Mammary epithelial cell (primary cell): ENCODE measurements at regions of chr16 and their contacts with region 1.

Region 1: GRCh38 chr16:30761928-30762810 is at the starts of genes CFAP119 and RNF40:
- DNase-seq: peak; percentile 97
- H3K4me3 ChIP-seq: peak within 1 kb of the TSS; percentile 46 to 66 (median 55)
- H3K27ac ChIP-seq: peak within 1 kb of the TSS; percentile 61
- H3K4me1 ChIP-seq: peaks cover 27% of the 10 kb centered on the region
- H3K27me3 ChIP-seq: no peaks in the 10 kb centered on the region
- CTCF ChIP-seq: no peak
- total RNA-seq, gene CFAP119: 1.5 to 8.3 TPM
- total RNA-seq, gene RNF40: 62.8 to 66.4 TPM

Region 2: DNA sequence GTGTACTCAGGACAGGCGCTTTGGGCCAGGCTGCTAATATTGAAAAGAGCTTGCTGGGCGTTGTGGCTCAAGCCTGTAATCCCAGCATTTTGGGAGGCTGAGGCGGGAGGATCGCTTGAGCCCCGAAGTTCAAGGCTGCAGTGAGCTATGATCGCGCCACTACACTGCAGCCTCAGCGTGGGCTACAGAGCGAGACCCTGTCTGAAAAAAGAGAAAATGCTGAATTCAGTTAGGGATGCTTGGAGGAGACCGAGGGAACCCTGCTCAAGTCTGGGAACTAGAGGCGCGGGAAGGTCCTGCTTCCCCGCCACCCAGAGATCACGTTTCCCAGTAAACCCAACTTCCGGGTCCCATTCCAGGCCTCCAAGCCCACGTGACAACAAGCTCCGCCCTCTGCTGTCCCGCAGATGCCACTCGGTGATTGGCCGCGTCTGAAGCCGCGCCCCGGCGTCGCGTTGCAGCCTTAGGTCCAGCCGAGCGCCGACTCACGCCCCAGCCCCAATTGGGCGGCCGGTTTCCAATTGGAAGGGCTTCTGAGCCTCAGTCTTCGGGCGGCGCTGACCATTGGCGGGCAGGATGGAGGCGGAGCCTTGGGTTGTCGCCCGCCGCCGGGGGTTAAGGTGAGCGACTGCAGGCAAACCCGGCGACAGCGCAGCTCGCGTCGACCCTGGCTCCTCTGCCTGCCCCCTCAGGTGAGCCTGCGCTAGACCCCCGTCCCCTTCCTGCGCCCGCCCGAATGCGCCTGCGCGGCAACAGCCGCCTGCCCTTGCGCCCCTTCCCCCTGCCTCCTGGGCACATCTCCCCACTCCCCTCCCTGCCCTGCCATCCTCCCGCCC is 14.2 kb before region 1 on chr16 and contains the start of gene PHKG2:
- CTCF ChIA-PET with region 1: no interaction called
- dilution Hi-C with region 1: no loop called
- in situ Hi-C with region 1: no loop called
- intact Hi-C with region 1: loop called (anchors 2 kb)
- DNase-seq: peak; percentile 99
- H3K4me3 ChIP-seq: peak within 1 kb of the TSS; percentile 58 to 61 (median 59)
- H3K27ac ChIP-seq: peak within 1 kb of the TSS; percentile 66
- H3K4me1 ChIP-seq: peaks cover 7% of the 10 kb centered on the region
- H3K27me3 ChIP-seq: no peaks in the 10 kb centered on the region
- CTCF ChIP-seq: no peak
- total RNA-seq, gene PHKG2: 15.3 to 39.3 TPM

Region 3: GRCh38 chr16:30844671-30845449 is 82.7 kb after region 1 on chr16:
- CTCF ChIA-PET with region 1: no interaction called
- dilution Hi-C with region 1: no loop called
- in situ Hi-C with region 1: no loop called
- intact Hi-C with region 1: no loop called
- DNase-seq: peak; percentile 68
- H3K4me3 ChIP-seq: no peak overlapping the region
- H3K27ac ChIP-seq: no peak overlapping the region
- H3K4me1 ChIP-seq: no peaks in the 10 kb centered on the region
- H3K27me3 ChIP-seq: no peaks in the 10 kb centered on the region
- CTCF ChIP-seq: peak; percentile 88 to 93